Mammary epithelial cell (primary cell): ENCODE measurements at regions of chr5 and their contacts with region 1.

Region 1: DNA sequence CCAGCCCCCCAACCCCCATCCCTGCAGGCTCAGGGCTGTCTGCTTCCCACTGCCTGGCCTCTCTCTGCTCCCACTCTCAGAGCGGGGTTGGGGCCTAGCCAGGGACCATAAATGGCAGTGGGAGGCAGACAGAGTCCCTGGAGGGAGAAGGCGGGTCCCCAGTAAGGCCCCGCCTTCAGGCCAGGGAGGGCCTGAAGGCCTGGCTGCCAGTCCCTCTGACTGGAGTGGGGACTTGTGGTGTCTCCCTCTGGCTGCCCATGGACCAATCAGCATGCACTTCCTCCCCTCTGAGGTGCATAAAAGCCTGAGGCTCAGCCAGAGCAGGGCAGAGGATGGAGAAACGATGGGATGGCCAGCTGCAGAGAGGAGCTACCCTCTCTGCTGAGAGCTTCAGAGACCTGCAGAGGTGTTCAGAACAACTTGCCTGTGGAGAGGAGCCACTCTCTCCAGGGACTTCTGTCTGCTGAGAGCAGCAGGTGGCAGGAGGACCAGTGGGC is 2.7 kb upstream of the BTNL9 start:
- DNase-seq: no peak
- H3K4me3 ChIP-seq: no peak overlapping the region
- H3K27ac ChIP-seq: no peak overlapping the region
- H3K4me1 ChIP-seq: no peaks in the 10 kb centered on the region
- H3K27me3 ChIP-seq: peaks cover 2% of the 10 kb centered on the region
- CTCF ChIP-seq: no peak

Region 2: DNA sequence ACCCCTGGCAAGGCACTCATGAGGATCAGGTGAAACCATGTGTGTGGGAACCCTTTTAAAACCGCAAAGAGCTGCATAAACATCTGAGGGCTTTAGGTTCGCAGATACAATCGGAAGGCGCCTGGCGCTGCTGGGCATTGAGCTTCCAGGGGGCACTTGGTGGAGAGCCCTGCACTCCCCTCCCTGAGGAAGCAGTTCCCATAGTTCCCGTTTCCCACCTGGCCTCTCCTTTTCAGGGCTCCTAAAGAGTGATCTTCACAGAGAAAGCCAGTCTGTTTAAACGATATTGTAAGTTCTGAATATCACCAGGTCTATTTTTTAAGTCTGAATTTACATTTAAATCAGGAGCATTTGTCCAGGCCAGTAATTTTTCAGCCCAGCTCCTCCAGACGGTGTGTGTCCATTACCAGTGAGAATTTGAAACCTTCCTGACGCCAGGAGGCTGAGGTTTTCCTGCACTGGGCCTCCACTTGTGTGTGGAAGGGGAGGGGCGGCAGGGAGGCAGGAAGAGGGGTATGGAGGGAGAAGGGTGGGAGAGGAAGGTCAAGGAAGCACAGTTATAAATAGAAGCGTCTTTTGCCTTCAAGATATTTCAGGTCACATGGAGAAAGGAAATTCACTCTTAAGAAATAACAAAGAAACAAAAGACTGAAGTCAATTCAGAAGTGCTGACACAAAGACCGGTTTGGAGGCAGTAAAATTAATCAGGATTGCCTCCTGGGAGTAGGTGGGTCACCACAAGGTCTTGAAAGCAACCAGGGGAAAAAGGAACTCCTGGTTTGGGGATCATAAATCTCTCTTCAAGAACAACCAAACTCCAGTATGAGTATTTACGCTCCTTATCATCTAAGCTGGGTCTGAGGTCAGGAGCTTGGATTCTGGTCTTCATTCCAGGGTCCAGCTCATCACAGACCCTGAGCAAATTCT is 220.5 kb before region 1 on chr5:
- CTCF ChIA-PET with region 1: no interaction called
- dilution Hi-C with region 1: no loop called
- in situ Hi-C with region 1: no loop called
- intact Hi-C with region 1: no loop called
- DNase-seq: no peak
- H3K4me3 ChIP-seq: no peak overlapping the region
- H3K27ac ChIP-seq: no peak overlapping the region
- H3K4me1 ChIP-seq: peaks cover 4% of the 10 kb centered on the region
- H3K27me3 ChIP-seq: no peaks in the 10 kb centered on the region
- CTCF ChIP-seq: no peak

Region 3: GRCh38 chr5:180990086-180990881 is 47.1 kb before region 1 on chr5:
- CTCF ChIA-PET with region 1: no interaction called
- dilution Hi-C with region 1: loop called (anchors 5 kb)
- in situ Hi-C with region 1: no loop called
- intact Hi-C with region 1: no loop called
- DNase-seq: no peak
- H3K4me3 ChIP-seq: no peak overlapping the region
- H3K27ac ChIP-seq: no peak overlapping the region
- H3K4me1 ChIP-seq: no peaks in the 10 kb centered on the region
- H3K27me3 ChIP-seq: no peaks in the 10 kb centered on the region
- CTCF ChIP-seq: no peak